Aorta (tissue), 5 donors: ENCODE measurements at regions of chr20 and their contacts with region 1.

Region 1: DNA sequence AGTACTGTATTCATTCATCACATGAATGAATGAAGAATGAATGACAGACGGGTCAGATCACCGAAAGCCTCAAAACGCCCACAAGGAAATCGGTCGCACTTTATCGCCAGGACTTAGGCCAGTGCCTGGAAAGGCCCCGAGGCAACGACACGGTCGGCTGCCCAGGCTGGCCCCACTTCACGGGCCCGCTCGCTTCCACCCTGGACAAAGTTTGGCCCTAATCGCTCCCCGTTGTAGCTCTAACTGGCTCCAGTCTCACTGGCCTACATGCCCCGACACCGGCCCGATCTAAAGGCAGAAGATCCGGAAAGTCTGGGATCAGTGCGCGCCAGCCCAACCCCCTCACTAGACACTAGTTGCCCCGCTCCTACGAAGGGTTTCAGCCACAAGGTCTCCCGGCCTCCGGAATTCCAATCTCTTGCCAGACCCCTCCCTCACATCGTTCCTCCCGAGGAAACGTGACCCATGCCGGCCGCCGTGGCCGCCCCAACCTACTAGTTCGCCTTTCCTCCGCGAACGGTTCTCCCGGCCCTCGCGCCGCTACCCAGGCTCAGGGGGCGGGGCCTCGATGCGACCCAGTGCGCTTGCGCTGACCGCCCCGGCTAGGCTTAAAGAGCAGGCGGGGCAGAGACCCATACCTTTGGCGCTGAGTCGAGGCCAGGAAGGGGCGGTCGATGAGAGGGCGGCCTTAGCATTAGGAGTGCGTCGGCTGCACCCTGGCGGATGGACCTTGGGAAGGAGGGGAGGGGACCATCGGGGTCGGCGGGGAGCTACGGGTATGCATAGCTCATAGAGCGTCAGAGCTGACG is at the starts of genes GSS and MYH7B:
- DNase-seq: peak; percentile 99 to 100
- ATAC-seq: peak; percentile 98
- H3K4me3 ChIP-seq: peak within 1 kb of the TSS; percentile 21 to 37
- H3K27ac ChIP-seq: peak within 1 kb of the TSS in 1 of 2 donors; percentile 62
- H3K4me1 ChIP-seq: no peaks in the 10 kb centered on the region
- H3K27me3 ChIP-seq: no peaks in the 10 kb centered on the region
- total RNA-seq, gene GSS: 22.9 to 24.3 TPM
- total RNA-seq, gene MYH7B: 0.57 to 0.88 TPM

Region 2: DNA sequence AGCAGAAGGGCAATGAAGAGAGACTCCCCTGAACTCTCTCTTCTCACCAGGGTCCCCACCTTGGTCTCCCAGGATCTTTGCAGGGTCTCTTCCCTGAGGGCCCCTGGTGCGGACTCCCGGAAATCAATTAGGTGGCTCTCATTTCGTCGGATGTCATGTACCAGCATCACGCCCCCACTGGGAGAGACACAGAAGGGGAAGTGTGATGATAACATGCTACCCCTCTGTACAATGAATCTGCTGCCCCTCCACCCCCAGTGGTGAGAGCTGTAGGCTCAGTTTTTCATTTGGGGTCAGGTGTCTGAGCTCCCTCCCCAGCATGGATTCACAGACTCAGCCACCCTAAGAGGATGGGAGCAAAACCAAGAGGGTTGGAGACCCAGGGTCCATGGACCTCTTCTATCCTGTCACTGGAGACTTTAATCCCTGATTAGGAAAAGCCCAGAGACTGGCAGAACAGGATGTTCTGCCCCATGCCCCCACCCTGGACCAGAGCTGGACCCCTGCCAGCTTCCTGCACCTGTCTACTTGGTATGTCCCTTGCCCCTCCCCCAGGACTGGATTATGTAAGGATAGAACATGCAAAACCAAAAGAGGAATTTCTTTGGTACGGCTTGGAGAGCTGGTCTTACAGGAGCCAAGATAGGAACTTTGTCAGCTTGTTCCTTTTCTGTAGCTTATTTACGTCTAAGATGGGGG is 93.9 kb before region 1 on chr20:
- intact Hi-C with region 1: no loop called
- DNase-seq: no peak
- ATAC-seq: no peak
- H3K4me3 ChIP-seq: no peak overlapping the region
- H3K27ac ChIP-seq: no peak overlapping the region
- H3K4me1 ChIP-seq: no peaks in the 10 kb centered on the region
- H3K27me3 ChIP-seq: no peaks in the 10 kb centered on the region

Region 3: GRCh38 chr20:34876162-34877001 is 79.1 kb before region 1 on chr20 and contains the start of gene ACSS2:
- intact Hi-C with region 1: loop called (anchors 1 to 2 kb)
- DNase-seq: peak; percentile 100
- ATAC-seq: peak; percentile 94
- H3K4me3 ChIP-seq: peak within 1 kb of the TSS; percentile 64 to 98
- H3K27ac ChIP-seq: peak within 1 kb of the TSS; percentile 52 to 83
- H3K4me1 ChIP-seq: peaks cover 0 to 4% of the 10 kb centered on the region in 2 donors
- H3K27me3 ChIP-seq: no peaks in the 10 kb centered on the region
- total RNA-seq, gene ACSS2: 64.8 to 87.4 TPM

Region 4: GRCh38 chr20:34907616-34908469 is 47.6 kb before region 1 on chr20:
- intact Hi-C with region 1: loop called in 1 of 2 experiments (anchors 5 kb)
- DNase-seq: peak; percentile 82 to 83
- ATAC-seq: peak; percentile 85
- H3K4me3 ChIP-seq: no peak overlapping the region
- H3K27ac ChIP-seq: peak overlapping the region; percentile 59 to 96
- H3K4me1 ChIP-seq: peaks cover 7% of the 10 kb centered on the region in 2 donors
- H3K27me3 ChIP-seq: no peaks in the 10 kb centered on the region